Right ventricle myocardium superior (tissue), 1 donor: ENCODE measurements at regions of chr1 and their contacts with region 1.

Region 1: DNA sequence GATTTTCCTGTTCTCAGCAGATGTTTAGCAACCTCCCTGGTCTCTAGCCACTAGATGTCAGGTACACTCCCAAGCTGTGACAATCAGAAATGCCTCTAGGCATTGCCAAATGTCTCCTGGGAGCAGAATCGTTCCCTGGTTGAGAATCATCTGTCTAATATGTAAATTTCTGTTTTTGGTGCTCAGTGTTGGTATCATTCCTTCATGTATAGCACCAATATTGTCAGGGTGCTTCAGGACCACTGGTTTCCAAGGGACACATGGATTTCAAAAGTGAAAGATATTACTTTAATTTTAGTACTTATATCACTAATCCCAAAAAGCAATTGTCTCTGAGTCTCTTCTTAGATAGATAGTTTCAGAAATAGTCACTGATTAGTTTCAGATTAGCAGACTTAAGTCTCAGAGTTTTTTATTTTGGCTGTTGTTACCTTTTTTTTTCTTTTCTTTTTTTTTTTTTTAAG is 160.1 kb downstream of the PTPRC start:
- DNase-seq: no peak
- ATAC-seq: no peak

Region 2: DNA sequence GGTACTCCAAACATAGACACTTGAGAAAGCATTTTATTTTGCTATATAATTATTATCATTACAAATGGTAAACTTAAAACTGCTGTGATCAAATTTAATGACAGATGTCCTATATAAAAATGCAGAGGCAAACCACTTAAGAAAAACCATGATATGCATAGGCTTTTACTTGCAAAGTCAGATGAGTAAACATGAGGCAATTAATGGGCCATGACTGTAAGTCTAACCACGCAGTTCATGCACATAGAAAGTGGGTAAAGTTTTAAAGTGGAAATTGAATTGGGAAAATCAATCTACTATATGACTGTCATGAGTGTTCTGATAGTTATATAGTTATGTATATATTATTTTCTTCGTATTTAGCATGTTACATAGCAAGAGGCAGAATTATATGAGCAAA is 59.1 kb after region 1 on chr1:
- intact Hi-C with region 1: no loop called
- DNase-seq: no peak
- ATAC-seq: no peak

Region 3: GRCh38 chr1:199113265-199113869 is 314.4 kb after region 1 on chr1:
- intact Hi-C with region 1: loop called (anchors 10 kb)
- DNase-seq: peak; percentile 60
- ATAC-seq: peak; percentile 60